CD4-positive, alpha-beta memory T cell (primary cell): ENCODE measurements at regions of chr15 and their contacts with region 1.

Region 1: GRCh38 chr15:33104212-33104611 is 90.3 kb downstream of the FMN1 start:
- DNase-seq: peak; percentile 24 to 80 (median 40)
- H3K4me3 ChIP-seq: no peak overlapping the region
- H3K4me3 Mint-ChIP-seq: peak overlapping the region in 7 of 8 donors; percentile 0 to 82 (median 79)
- H3K27ac ChIP-seq: peak overlapping the region; percentile 24
- H3K27ac Mint-ChIP-seq: peak overlapping the region in 5 of 7 donors; percentile 46 to 97 (median 82)
- H3K4me1 ChIP-seq: peaks cover 22% of the 10 kb centered on the region
- H3K4me1 Mint-ChIP-seq: peaks cover 0 to 36% (median 2%) of the 10 kb centered on the region in 4 donors
- H3K27me3 ChIP-seq: no peaks in the 10 kb centered on the region
- H3K27me3 Mint-ChIP-seq: peaks cover 4% of the 10 kb centered on the region in 2 donors

Region 2: GRCh38 chr15:32130823-32131222 is 973.4 kb before region 1 on chr15:
- CTCF ChIA-PET with region 1: no interaction called
- POLR2A ChIA-PET with region 1: no interaction called
- intact Hi-C with region 1: no loop called
- DNase-seq: no peak
- H3K4me3 ChIP-seq: no peak overlapping the region
- H3K4me3 Mint-ChIP-seq: no peak overlapping the region
- H3K27ac ChIP-seq: no peak overlapping the region
- H3K27ac Mint-ChIP-seq: no peak overlapping the region
- H3K4me1 ChIP-seq: no peaks in the 10 kb centered on the region
- H3K4me1 Mint-ChIP-seq: no peaks in the 10 kb centered on the region
- H3K27me3 ChIP-seq: peaks cover 3% of the 10 kb centered on the region
- H3K27me3 Mint-ChIP-seq: peaks cover 12 to 15% of the 10 kb centered on the region in 2 donors

Region 3: GRCh38 chr15:33007303-33007855 is 96.8 kb before region 1 on chr15:
- CTCF ChIA-PET with region 1: no interaction called
- POLR2A ChIA-PET with region 1: no interaction called
- intact Hi-C with region 1: no loop called
- DNase-seq: no peak
- H3K4me3 ChIP-seq: no peak overlapping the region
- H3K4me3 Mint-ChIP-seq: no peak overlapping the region
- H3K27ac ChIP-seq: no peak overlapping the region
- H3K27ac Mint-ChIP-seq: no peak overlapping the region
- H3K4me1 ChIP-seq: no peaks in the 10 kb centered on the region
- H3K4me1 Mint-ChIP-seq: peaks cover 0 to 10% (median 0%) of the 10 kb centered on the region in 4 donors
- H3K27me3 ChIP-seq: no peaks in the 10 kb centered on the region
- H3K27me3 Mint-ChIP-seq: peaks cover 4 to 7% of the 10 kb centered on the region in 2 donors

Region 4: GRCh38 chr15:33126559-33127290 is 22.5 kb after region 1 on chr15:
- CTCF ChIA-PET with region 1: interaction called, 3 read pairs
- POLR2A ChIA-PET with region 1: interaction called, 4 read pairs
- intact Hi-C with region 1: loop called (anchors 1 kb)
- DNase-seq: peak; percentile 67 to 86 (median 71)
- H3K4me3 ChIP-seq: no peak overlapping the region
- H3K4me3 Mint-ChIP-seq: peak overlapping the region in 7 of 8 donors; percentile 57 to 88 (median 75)
- H3K27ac ChIP-seq: peak overlapping the region; percentile 3
- H3K27ac Mint-ChIP-seq: peak overlapping the region in 6 of 7 donors; percentile 33 to 95 (median 78)
- H3K4me1 ChIP-seq: peaks cover 23% of the 10 kb centered on the region
- H3K4me1 Mint-ChIP-seq: peaks cover 0 to 48% (median 21%) of the 10 kb centered on the region in 4 donors
- H3K27me3 ChIP-seq: no peaks in the 10 kb centered on the region
- H3K27me3 Mint-ChIP-seq: peaks cover 0 to 2% of the 10 kb centered on the region in 2 donors

Region 5: DNA sequence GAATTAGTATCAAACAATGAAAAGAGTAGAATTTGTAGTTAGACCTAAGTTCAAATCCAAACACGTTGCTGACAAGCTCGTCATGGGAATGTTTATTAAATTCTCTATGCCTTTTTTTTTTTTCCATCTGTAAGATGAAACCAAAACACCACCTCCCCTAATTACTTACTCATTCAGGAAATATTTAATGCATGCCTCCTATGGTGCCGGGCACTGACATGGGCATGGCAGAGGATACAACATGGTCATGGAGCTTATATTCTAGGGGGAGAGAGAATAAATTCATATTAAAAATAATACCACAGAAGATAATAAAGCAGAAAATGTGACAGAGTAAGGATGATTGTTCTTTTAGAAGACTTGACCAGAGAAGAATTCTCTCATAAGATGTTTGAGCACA is 422.3 kb after region 1 on chr15:
- CTCF ChIA-PET with region 1: no interaction called
- POLR2A ChIA-PET with region 1: no interaction called
- intact Hi-C with region 1: no loop called
- DNase-seq: no peak
- H3K4me3 ChIP-seq: no peak overlapping the region
- H3K4me3 Mint-ChIP-seq: no peak overlapping the region
- H3K27ac ChIP-seq: no peak overlapping the region
- H3K27ac Mint-ChIP-seq: no peak overlapping the region
- H3K4me1 ChIP-seq: no peaks in the 10 kb centered on the region
- H3K4me1 Mint-ChIP-seq: no peaks in the 10 kb centered on the region
- H3K27me3 ChIP-seq: no peaks in the 10 kb centered on the region
- H3K27me3 Mint-ChIP-seq: no peaks in the 10 kb centered on the region